IMR-90 (cell line): ENCODE measurements at regions of chr3 and their contacts with region 1.

Region 1: DNA sequence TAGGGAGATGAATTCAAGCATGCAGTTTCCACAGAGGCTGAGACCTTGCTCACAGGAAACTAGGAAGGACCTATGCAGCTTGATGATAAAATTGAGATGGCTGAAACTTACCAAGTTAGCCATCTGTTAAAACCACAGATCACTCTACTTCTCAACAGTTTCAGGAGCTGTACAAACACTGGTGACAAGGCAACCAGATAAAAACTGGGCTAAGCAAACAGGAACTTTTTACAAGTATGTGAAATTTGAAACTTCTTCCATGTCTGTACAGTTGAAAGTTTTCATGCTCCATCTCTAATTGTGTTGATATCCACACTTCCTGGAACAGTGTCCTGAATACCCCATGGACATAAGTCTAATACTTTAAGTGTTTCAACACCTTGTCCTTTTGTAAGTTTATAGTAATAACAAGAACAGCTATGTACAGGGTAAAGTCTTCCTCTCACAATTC is 78.2 kb downstream of the FAIM start:
- DNase-seq: peak; percentile 89
- ATAC-seq: peak; percentile 88
- H3K4me3 ChIP-seq: no peak overlapping the region
- H3K27ac ChIP-seq: no peak overlapping the region
- H3K4me1 ChIP-seq: peaks cover 4% of the 10 kb centered on the region
- H3K27me3 ChIP-seq: no peaks in the 10 kb centered on the region
- CTCF ChIP-seq: no peak
- POLR2A ChIP-seq: no peak
- RAD21 ChIP-seq: no peak

Region 2: DNA sequence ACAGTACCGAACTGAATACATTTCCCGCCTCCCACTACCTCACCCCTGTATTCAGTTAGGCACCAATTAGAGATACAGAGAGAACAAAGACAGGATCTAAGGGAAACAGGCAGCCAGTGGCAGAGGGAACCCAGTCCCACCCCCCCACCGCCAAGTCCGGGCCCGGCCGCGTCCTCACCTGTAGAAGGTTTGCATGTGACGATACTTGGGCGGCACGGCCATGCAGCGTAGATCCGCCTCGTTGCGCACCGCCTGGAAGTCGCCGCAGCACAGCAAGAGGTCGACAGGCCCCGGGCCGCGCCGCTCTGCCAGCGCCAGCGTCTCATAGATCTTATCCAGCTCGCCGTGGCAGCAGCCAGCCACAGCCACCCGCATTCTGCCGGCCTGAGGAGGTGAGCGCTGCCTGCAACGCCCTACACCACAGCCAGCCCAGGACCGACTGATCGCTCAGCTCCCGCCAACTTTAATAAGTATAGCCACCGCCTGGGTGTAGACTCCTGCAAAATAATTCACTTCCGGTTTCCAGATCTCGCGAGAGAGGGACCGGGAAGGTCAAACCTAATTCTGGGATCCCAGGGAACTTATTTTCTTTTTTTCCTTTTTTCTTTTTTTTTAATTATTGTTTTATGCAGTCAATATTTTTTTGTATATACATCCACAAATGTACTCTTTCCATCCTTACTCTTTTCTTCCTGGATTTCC is 512.2 kb before region 1 on chr3 and contains the start of gene DBR1:
- CTCF ChIA-PET with region 1: no interaction called
- POLR2A ChIA-PET with region 1: no interaction called
- dilution Hi-C with region 1: no loop called
- in situ Hi-C with region 1: no loop called
- intact Hi-C with region 1: no loop called
- DNase-seq: peak; percentile 80
- ATAC-seq: peak; percentile 96
- H3K4me3 ChIP-seq: peak within 1 kb of the TSS; percentile 87
- H3K27ac ChIP-seq: peak within 1 kb of the TSS; percentile 84
- H3K4me1 ChIP-seq: no peaks in the 10 kb centered on the region
- H3K27me3 ChIP-seq: no peaks in the 10 kb centered on the region; the same call in 1 of the 2 replicates
- CTCF ChIP-seq: no peak
- POLR2A ChIP-seq: peak; percentile 89
- RAD21 ChIP-seq: no peak
- total RNA-seq, gene DBR1: 12.5 and 17.5 TPM in 2 replicates

Region 3: DNA sequence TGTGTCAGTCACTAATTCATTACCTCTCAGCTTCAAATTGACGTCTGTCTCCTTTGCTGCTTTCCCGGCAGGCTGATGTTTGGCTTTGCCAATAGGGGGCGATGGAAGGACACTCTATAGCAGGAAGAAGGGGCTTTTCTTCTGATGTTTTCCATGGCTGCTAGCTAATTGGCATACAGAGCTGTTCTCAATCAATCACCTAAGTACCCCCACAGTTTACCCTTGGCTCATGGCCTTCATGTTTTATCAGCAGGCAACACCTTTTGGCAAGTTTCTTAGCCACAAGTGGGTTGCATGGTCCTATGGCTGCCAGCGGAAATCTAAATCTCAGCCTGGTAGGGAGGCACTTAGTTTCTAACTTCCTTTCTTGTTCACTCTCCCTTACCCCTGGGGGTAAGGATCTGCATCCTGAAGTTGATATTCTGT is 207.3 kb before region 1 on chr3:
- CTCF ChIA-PET with region 1: no interaction called
- POLR2A ChIA-PET with region 1: no interaction called
- dilution Hi-C with region 1: no loop called
- in situ Hi-C with region 1: no loop called
- intact Hi-C with region 1: loop called (anchors 5 kb)
- DNase-seq: peak; percentile 46
- ATAC-seq: peak; percentile 79
- H3K4me3 ChIP-seq: no peak overlapping the region
- H3K27ac ChIP-seq: no peak overlapping the region
- H3K4me1 ChIP-seq: no peaks in the 10 kb centered on the region
- H3K27me3 ChIP-seq: no peaks in the 10 kb centered on the region
- CTCF ChIP-seq: peak; percentile 70
- POLR2A ChIP-seq: no peak
- RAD21 ChIP-seq: peak; percentile 72